Mammary epithelial cell (primary cell): ENCODE measurements at regions of chr15 and their contacts with region 1.

Region 1: GRCh38 chr15:92903941-92904831 is 4.1 kb downstream of the CHD2 start:
- DNase-seq: peak; percentile 99
- H3K4me3 ChIP-seq: peak overlapping the region; percentile 74 to 100 (median 98)
- H3K27ac ChIP-seq: peak overlapping the region; percentile 97
- H3K4me1 ChIP-seq: peaks cover 31% of the 10 kb centered on the region
- H3K27me3 ChIP-seq: no peaks in the 10 kb centered on the region
- CTCF ChIP-seq: no peak

Region 2: GRCh38 chr15:92797168-92797951 is 106.8 kb before region 1 on chr15:
- CTCF ChIA-PET with region 1: no interaction called
- dilution Hi-C with region 1: no loop called
- in situ Hi-C with region 1: no loop called
- intact Hi-C with region 1: loop called (anchors 1 kb)
- DNase-seq: peak; percentile 66
- H3K4me3 ChIP-seq: no peak overlapping the region
- H3K27ac ChIP-seq: peak overlapping the region; percentile 35
- H3K4me1 ChIP-seq: peaks cover 17% of the 10 kb centered on the region
- H3K27me3 ChIP-seq: no peaks in the 10 kb centered on the region
- CTCF ChIP-seq: peak; percentile 58 to 65

Region 3: DNA sequence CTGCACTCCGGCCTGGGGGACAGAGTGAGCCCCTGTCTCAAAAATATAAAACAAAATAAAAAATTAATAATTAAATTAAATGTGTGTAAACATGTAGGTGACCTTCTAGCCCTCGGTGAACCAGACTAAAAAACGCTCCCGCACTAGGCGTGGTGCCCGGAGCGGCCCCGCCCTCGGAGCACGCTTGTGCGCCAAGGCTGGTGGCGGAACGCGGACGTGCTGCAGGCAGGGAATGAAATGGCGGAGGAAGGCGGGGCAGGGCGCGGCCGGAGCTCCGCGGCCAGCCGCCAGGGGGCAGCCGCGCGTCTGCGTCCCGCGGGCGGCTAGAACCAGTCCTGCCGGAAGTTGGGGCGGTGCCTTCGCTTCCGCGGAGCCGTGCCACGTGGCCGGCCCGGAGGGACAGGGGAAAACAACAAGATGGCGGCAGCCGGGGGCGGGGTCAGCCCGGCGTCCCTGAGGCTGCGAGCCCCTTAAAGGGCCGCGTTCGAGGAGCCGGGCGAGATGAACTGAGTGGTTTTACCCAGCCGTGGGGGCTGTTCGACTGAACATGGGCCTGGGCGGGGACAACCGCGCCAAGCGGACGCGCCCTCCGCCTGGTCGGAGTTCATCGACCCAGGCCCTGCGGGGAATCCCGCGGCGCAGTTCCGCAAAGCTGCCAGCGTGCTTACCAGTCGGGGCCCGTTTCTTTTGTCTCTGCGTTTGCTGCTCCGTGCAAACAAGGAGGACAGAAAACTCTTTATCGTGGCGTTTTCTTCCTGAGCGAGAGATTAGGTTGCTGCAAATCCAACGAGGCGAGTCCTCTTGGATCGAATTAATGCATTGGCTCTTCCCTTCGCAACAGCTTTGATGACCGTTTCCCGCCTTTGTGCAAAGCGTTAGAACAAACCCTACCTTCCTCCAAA is 95.0 kb before region 1 on chr15:
- CTCF ChIA-PET with region 1: no interaction called
- dilution Hi-C with region 1: no loop called
- in situ Hi-C with region 1: no loop called
- intact Hi-C with region 1: loop called (anchors 1 kb)
- DNase-seq: peak; percentile 96
- H3K4me3 ChIP-seq: peak overlapping the region; percentile 41 to 66 (median 60)
- H3K27ac ChIP-seq: peak overlapping the region; percentile 98
- H3K4me1 ChIP-seq: peaks cover 37% of the 10 kb centered on the region
- H3K27me3 ChIP-seq: no peaks in the 10 kb centered on the region
- CTCF ChIP-seq: peak; percentile 74 to 76

Region 4: GRCh38 chr15:92881802-92882696 is 22.1 kb before region 1 on chr15:
- CTCF ChIA-PET with region 1: no interaction called
- dilution Hi-C with region 1: no loop called
- in situ Hi-C with region 1: no loop called
- intact Hi-C with region 1: loop called (anchors 1 kb)
- DNase-seq: peak; percentile 100
- H3K4me3 ChIP-seq: peak overlapping the region; percentile 44 to 51 (median 48)
- H3K27ac ChIP-seq: peak overlapping the region; percentile 95
- H3K4me1 ChIP-seq: peaks cover 15% of the 10 kb centered on the region
- H3K27me3 ChIP-seq: no peaks in the 10 kb centered on the region
- CTCF ChIP-seq: no peak

Region 5: DNA sequence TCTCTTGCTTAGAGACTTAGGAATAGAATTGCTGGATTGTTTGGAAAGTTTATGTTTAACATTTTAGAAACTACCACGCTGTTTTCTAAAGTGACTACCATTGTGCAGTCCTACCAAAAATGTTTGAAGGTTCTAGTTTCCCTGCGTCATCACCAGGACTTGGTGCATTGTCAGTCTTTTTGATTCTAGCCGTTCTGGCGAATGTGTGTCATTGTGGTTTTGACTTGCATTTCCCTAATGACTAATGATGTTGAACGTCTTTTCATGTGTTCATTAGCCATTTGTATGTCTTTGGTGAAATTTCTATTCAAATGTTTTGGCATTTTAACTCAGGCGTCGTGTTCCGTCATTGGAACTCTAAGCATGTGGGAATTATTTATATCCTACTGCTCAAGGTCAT is 53.9 kb after region 1 on chr15:
- CTCF ChIA-PET with region 1: no interaction called
- dilution Hi-C with region 1: no loop called
- in situ Hi-C with region 1: no loop called
- intact Hi-C with region 1: no loop called
- DNase-seq: peak; percentile 64
- H3K4me3 ChIP-seq: no peak overlapping the region
- H3K27ac ChIP-seq: no peak overlapping the region
- H3K4me1 ChIP-seq: peaks cover 3% of the 10 kb centered on the region
- H3K27me3 ChIP-seq: no peaks in the 10 kb centered on the region
- CTCF ChIP-seq: no peak